ENCODE measurements at regions of chr5 and their contacts with region 1.

Region 1: GRCh38 chr5:151094054-151094851 is 13.4 kb upstream of the TNIP1 start:
- DNase-seq: peak; percentile 88
- H3K4me3 Mint-ChIP-seq: peak overlapping the region; percentile 74
- H3K27ac Mint-ChIP-seq: peak overlapping the region; percentile 90
- H3K4me1 Mint-ChIP-seq: peaks cover 63% of the 10 kb centered on the region
- H3K27me3 Mint-ChIP-seq: no peaks in the 10 kb centered on the region

Region 2: DNA sequence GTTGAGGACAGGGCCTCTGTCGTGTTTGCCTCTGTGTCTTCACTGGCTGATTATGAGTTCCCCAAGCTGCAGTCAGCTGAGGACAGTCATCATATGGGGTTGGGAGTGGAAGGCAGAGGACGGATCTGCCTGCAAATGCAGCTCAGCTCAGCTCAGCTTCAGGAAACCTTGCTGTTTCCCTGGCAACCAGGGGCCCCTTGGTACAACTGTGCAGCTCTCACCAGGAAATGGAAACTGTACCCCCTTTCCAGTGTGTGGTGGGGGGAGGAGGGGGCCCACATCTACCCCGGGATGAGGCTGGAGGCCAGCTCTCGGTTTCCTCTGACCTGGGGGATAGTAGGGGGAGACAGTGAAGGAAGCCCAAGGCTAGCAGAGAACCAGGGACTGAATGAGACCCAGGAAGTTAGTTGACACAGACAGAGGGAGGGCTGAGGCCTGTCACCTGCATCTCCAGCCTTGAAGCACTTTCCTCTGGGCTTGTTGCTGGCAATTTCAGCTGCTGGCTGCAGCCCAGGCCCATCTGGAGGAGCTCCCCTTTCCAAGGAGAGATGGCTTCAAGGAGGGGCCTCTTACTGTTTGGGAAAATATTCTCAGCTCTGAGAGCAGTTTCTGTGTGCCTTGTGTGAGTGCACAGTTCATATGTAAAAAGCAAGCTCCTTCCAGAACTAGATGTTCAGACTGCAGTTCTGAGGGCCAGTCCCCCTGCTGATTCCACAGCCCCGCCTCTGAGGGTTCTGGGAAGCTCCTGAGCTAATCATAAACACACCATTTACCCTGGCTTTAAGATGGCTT is 56.4 kb after region 1 on chr5:
- intact Hi-C with region 1: loop called (anchors 1 kb)
- DNase-seq: peak; percentile 93
- H3K4me3 Mint-ChIP-seq: peak overlapping the region; percentile 66
- H3K27ac Mint-ChIP-seq: peak overlapping the region; percentile 88
- H3K4me1 Mint-ChIP-seq: peaks cover 81% of the 10 kb centered on the region
- H3K27me3 Mint-ChIP-seq: no peaks in the 10 kb centered on the region